ENCODE measurements at regions of chr2 and their contacts with region 1.

Region 1: DNA sequence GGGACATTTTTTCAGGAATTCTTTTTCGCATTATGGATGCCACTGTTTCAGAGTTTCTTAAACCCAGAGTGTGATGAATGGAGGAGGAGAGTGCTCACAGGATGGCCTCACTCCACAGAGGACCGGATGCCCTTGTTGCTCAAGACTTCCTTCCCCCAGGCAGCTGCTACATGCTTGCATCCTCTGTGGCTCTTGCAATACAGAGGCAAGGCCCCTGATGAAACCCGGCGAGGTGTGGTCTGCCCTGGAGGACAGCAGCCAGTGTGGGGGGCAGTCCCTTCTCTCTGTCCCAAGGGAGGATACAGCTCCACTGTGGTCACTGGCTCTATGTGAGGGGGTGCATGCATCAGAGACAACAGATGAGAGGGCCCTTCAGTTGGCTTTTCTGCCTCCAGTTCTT is 109.6 kb downstream of the SH3RF3 start:
- DNase-seq: peak; percentile 70
- H3K4me3 ChIP-seq: no peak overlapping the region
- H3K27ac ChIP-seq: peak overlapping the region; percentile 55
- H3K4me1 ChIP-seq: peaks cover 75% of the 10 kb centered on the region
- H3K27me3 ChIP-seq: no peaks in the 10 kb centered on the region
- CTCF ChIP-seq: no peak

Region 2: GRCh38 chr2:109128048-109128465 is 110.5 kb before region 1 on chr2:
- intact Hi-C with region 1: loop called (anchors 10 kb)
- DNase-seq: peak; percentile 81
- H3K4me3 ChIP-seq: peak overlapping the region; percentile 85
- H3K27ac ChIP-seq: peak overlapping the region; percentile 87
- H3K4me1 ChIP-seq: peaks cover 44% of the 10 kb centered on the region
- H3K27me3 ChIP-seq: peaks cover 4% of the 10 kb centered on the region
- CTCF ChIP-seq: peak; percentile 95

Region 3: DNA sequence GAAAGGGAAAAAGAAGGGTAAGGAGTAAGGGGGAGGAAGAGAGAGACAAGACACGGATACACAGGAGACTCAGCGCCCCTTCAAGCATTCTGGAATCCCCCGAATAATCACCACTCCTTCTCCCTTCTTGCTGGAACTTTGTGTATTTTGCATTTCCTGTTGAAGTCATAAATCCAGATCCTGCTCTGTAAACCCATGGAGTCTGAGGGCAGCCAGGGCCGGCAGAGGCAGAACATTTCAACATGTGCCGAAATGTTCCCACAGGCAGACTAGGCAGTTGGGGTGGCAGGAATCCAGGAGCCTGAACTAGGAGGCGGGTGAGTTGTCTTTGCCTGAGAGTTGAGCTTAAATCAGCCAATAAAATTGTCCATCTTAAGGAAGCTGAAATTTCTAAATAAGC is 83.5 kb after region 1 on chr2:
- intact Hi-C with region 1: loop called (anchors 10 kb)
- DNase-seq: peak; percentile 88
- H3K4me3 ChIP-seq: peak overlapping the region; percentile 6
- H3K27ac ChIP-seq: peak overlapping the region; percentile 89
- H3K4me1 ChIP-seq: peaks cover 97% of the 10 kb centered on the region
- H3K27me3 ChIP-seq: no peaks in the 10 kb centered on the region
- CTCF ChIP-seq: no peak